ENCODE measurements at regions of chr3 and their contacts with region 1.

Region 1: DNA sequence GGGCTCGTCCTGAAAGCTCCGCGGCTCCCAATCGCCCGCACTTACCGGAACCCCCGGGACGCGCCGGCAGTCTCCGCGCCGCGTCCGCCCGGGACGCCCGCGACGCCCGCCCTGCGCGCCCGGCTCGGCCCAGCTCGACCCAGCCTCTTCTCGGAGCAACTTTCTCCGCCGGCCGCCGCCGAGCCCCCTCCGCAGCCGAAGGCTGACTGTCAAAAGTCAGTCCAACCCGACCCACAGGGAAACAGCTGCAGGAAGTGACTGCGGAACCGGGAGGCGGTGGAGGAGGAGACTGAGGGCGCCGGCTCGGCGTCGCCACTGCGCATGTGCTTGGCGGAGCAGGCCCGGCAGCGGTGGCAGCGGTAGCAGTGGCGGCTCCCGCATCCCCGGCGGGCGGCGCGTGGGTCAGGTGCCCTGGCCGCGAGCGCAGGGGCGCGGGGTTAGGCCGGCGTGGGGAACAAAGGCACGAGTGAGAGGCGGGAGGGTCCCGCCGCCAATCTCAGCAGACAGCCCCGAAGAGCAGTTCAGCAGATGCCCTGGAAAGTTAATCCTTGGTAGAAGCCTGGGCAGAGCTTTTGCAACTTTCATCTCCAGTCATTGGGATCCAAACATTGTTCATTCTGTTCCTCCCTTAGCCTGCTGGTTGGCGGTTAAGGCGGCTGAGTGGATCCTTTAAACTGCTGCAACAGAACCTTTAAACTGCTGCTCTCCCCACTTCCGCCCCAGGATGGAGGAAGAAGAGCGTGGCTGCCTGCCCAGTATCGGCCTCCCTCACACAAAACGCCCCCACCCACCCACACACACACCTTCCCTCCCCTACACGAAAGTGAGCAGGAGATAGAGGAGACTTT is at the start of gene ZMAT3:
- DNase-seq: peak; percentile 88
- ATAC-seq: peak; percentile 90
- H3K4me3 Mint-ChIP-seq: peak within 1 kb of the TSS; percentile 98
- H3K27ac Mint-ChIP-seq: peak within 1 kb of the TSS; percentile 91
- H3K4me1 Mint-ChIP-seq: peaks cover 36% of the 10 kb centered on the region
- H3K27me3 Mint-ChIP-seq: no peaks in the 10 kb centered on the region
- total RNA-seq, gene ZMAT3: 14.1 to 15.1 TPM

Region 2: DNA sequence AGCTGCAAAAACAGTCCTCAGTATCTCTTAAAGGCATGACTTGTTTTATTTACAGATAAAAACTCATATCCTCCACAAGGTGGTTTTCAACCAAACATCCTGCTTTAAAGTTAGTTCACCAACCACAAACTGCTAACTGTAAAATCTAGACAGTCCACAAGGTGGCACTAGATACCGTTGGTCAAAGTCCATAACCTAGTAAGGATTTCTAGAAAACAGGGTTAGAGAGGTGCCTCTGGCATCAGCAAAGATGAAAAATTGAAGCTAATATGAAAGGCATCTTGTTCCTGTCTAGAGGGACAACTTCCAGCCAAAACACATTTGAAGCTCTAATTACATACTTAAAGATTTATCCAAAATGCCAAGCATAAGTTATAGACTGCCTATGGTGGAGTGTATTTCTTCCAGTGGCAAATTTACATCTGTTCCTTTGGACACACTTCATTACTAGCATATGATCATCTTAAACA is 56.2 kb before region 1 on chr3:
- CTCF ChIA-PET with region 1: interaction called, 14 read pairs
- DNase-seq: peak; percentile 82
- ATAC-seq: peak; percentile 91
- H3K4me3 Mint-ChIP-seq: no peak overlapping the region
- H3K27ac Mint-ChIP-seq: peak overlapping the region; percentile 52
- H3K4me1 Mint-ChIP-seq: peaks cover 29% of the 10 kb centered on the region
- H3K27me3 Mint-ChIP-seq: peaks cover 17% of the 10 kb centered on the region

Region 3: DNA sequence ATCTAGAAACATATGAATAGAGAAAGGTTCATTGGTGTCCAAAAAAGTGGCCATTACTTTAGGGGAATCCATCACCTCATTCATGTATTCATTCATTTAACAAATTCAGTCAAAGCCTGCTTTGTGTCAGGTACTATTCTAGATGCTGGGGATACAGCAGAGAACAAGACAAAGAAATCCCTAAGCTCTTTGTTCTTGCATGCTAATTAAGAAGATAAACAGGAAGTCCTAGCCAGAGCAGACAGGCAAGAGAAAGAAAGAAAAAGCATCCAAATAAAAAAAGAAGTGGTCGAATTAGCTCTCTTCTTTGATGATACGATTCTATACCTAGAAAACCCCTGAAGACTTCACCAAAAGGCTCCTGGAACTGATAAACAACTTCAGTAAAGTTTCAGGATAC is 12.2 kb after region 1 on chr3:
- CTCF ChIA-PET with region 1: interaction called, 11 read pairs
- DNase-seq: no peak
- ATAC-seq: no peak
- H3K4me3 Mint-ChIP-seq: peak overlapping the region; percentile 11
- H3K27ac Mint-ChIP-seq: peak overlapping the region; percentile 19
- H3K4me1 Mint-ChIP-seq: peaks cover 17% of the 10 kb centered on the region
- H3K27me3 Mint-ChIP-seq: peaks cover 7% of the 10 kb centered on the region

Region 4: DNA sequence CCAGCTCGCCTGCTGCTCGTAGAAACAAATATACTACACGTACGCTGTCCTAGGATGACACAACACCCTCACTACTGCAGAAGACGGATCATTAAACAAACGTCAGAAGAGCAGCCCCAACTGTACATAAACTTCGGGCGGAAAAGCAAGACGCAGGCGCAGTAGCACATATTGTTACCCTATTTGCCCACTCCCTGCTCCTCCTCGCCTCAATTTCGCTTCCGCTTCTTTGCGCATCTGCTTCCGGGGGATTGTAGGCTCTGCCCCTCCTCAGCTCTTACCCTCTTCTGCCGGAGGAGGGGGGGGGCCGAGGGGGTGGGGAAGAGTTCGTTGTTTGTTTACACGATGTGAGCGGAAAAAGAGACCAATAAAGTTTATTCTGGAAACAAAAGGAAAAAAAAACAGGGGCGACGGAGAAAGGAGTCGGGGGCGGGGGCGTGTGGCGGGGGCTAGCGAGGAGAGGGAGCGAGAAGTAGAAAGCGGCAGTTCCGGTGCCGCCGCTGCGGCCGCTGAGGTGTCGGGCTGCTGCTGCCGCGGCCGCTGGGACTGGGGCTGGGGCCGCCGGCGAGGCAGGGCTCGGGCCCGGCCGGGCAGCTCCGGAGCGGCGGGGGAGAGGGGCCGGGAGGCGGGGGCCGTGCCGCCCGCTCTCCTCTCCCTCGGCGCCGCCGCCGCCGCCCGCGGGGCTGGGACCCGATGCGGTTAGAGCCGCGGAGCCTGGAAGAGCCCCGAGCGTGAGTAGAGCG is 76.3 kb after region 1 on chr3 and contains the start of gene PIK3CA:
- CTCF ChIA-PET with region 1: interaction called, 14 read pairs
- DNase-seq: peak; percentile 98
- ATAC-seq: peak; percentile 86
- H3K4me3 Mint-ChIP-seq: no peak within 1 kb of the TSS
- H3K27ac Mint-ChIP-seq: peak within 1 kb of the TSS; percentile 93
- H3K4me1 Mint-ChIP-seq: peaks cover 29% of the 10 kb centered on the region
- H3K27me3 Mint-ChIP-seq: peaks cover 24% of the 10 kb centered on the region
- total RNA-seq, gene PIK3CA: 18.5 to 19.7 TPM

Region 5: DNA sequence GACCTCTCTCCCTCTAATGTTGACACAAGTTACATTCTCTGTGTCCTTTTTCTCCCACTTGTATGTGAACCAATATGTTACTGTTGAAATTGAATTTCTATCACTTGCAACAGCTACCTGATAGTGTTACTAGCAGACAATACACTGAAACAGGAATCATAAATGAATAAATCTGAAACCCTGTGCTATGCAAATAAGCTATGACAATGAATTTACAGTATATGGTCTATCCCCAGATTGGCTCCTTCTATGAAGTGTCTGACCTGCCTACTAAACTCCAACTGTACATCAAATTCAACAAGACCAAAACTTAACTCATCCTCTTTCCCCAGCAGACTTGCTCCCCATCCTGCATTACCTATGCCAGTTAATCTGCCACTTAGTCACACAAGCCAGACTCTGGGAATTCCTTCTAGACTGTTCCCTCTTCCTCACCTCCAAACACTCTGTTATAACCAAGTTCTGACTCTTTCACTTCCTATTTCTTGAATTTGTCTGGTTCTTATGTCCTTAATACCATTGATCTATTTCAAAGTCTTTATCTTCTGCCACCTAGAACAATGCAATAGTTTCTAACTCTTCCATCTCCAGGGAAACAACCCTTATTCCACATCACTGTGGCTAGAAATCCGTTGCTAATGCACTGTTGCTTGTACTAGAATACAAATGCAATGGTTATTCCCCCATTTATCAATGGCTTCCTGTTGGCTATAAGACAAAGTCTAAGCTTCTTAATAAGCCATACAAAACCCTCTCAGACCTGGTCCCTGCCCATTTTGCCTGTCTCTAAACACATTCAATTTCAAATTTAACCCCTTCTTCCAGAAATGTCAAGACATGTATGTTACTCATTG is 237.7 kb after region 1 on chr3:
- CTCF ChIA-PET with region 1: interaction called, 30 read pairs
- DNase-seq: no peak
- ATAC-seq: no peak
- H3K4me3 Mint-ChIP-seq: no peak overlapping the region
- H3K27ac Mint-ChIP-seq: no peak overlapping the region
- H3K4me1 Mint-ChIP-seq: no peaks in the 10 kb centered on the region
- H3K27me3 Mint-ChIP-seq: peaks cover 38% of the 10 kb centered on the region

Region 6: GRCh38 chr3:179322286-179323196 is 250.8 kb after region 1 on chr3 and contains the start of gene ZNF639:
- CTCF ChIA-PET with region 1: interaction called, 11 read pairs
- DNase-seq: peak; percentile 87
- ATAC-seq: peak; percentile 83
- H3K4me3 Mint-ChIP-seq: peak within 1 kb of the TSS; percentile 88
- H3K27ac Mint-ChIP-seq: peak within 1 kb of the TSS; percentile 92
- H3K4me1 Mint-ChIP-seq: peaks cover 36% of the 10 kb centered on the region
- H3K27me3 Mint-ChIP-seq: peaks cover 12% of the 10 kb centered on the region
- total RNA-seq, gene ZNF639: 30.1 to 32.2 TPM

Measured in activated CD8-positive, alpha-beta memory T cell treated with anti-CD3 and anti-CD28 coated beads, Interleukin-2, amount 10 ng/mL, durations not matched to agents 7 days and 5 days (primary cell).